PC-9 (cell line): ENCODE measurements at regions of chr1 and their contacts with region 1.

Region 1: GRCh38 chr1:244272471-244273261 is 179.0 kb downstream of the ADSS2 start:
- DNase-seq: peak; percentile 70 to 77
- H3K4me3 ChIP-seq: no peak overlapping the region
- H3K27ac ChIP-seq: peak overlapping the region; percentile 14; the same call in 1 of the 2 replicates
- H3K4me1 ChIP-seq: peaks cover 25% of the 10 kb centered on the region
- H3K27me3 ChIP-seq: no peaks in the 10 kb centered on the region
- CTCF ChIP-seq: peak; percentile 98

Region 2: DNA sequence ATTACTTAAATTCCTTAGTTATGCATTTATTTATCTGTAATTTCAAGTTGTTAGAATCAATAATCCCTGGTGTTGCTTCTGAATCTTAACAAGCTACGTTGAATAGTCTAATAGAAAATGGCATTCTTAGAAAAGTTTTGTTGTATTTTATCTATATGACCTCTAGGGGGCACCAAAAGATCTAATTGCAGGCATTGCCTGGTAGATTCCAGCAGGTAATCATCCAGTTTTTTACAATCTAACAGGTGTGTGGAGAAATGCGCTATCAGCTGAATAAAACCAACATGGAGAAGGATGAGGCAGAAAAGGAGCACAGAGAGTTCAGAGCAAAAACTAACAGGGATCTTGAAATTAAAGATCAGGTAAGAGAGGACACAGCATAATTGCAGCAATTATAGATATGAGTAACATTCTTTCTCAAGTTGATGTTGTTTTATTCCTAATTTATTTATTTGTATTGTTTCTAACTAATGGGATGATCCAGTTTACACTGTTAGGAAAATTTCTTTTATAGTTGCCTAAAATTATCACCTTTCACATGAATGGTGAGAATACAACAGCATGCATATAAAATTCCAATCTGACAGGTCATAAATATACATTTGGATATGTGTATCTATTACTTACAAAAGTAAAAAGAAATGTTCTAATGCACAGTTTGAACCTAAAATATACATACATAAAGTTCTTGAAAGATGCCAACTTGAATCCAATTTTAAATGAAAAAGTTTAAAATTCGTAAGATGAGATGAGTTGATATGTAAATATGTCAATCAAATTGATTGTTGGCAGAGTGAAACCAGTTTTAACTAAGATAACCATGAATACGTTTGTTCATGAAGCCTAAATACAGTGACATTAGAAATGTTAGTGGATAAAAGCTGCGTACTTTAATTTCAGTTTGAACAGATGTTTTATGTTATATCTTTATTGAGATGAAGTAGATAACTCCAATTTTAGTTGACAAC is 928.4 kb before region 1 on chr1:
- CTCF ChIA-PET with region 1: interaction called, 3 read pairs
- POLR2A ChIA-PET with region 1: no interaction called
- intact Hi-C with region 1: loop called (anchors 1 kb)
- DNase-seq: peak in 1 of 2 experiments; percentile 48
- H3K4me3 ChIP-seq: no peak overlapping the region
- H3K27ac ChIP-seq: no peak overlapping the region
- H3K4me1 ChIP-seq: no peaks in the 10 kb centered on the region
- H3K27me3 ChIP-seq: no peaks in the 10 kb centered on the region
- CTCF ChIP-seq: peak; percentile 87

Region 3: GRCh38 chr1:243850452-243851256 is 422.0 kb before region 1 on chr1:
- CTCF ChIA-PET with region 1: no interaction called
- POLR2A ChIA-PET with region 1: no interaction called
- intact Hi-C with region 1: loop called (anchors 2 kb)
- DNase-seq: peak; percentile 70 to 92
- H3K4me3 ChIP-seq: peak overlapping the region; percentile 69
- H3K27ac ChIP-seq: peak overlapping the region; percentile 85
- H3K4me1 ChIP-seq: peaks cover 49% of the 10 kb centered on the region
- H3K27me3 ChIP-seq: no peaks in the 10 kb centered on the region
- CTCF ChIP-seq: no peak

Region 4: GRCh38 chr1:244012202-244012601 is 260.5 kb before region 1 on chr1:
- CTCF ChIA-PET with region 1: no interaction called
- POLR2A ChIA-PET with region 1: interaction called, 27 read pairs
- intact Hi-C with region 1: no loop called
- DNase-seq: peak in 1 of 2 experiments; percentile 43
- H3K4me3 ChIP-seq: no peak overlapping the region
- H3K27ac ChIP-seq: no peak overlapping the region
- H3K4me1 ChIP-seq: no peaks in the 10 kb centered on the region
- H3K27me3 ChIP-seq: no peaks in the 10 kb centered on the region
- CTCF ChIP-seq: no peak

Region 5: GRCh38 chr1:244163861-244164562 is 108.7 kb before region 1 on chr1:
- CTCF ChIA-PET with region 1: no interaction called
- POLR2A ChIA-PET with region 1: no interaction called
- intact Hi-C with region 1: loop called (anchors 1 kb)
- DNase-seq: peak; percentile 76 to 100
- H3K4me3 ChIP-seq: peak overlapping the region; percentile 15; the same call in 1 of the 2 replicates
- H3K27ac ChIP-seq: peak overlapping the region; percentile 83
- H3K4me1 ChIP-seq: peaks cover 54% of the 10 kb centered on the region
- H3K27me3 ChIP-seq: no peaks in the 10 kb centered on the region
- CTCF ChIP-seq: no peak

Region 6: DNA sequence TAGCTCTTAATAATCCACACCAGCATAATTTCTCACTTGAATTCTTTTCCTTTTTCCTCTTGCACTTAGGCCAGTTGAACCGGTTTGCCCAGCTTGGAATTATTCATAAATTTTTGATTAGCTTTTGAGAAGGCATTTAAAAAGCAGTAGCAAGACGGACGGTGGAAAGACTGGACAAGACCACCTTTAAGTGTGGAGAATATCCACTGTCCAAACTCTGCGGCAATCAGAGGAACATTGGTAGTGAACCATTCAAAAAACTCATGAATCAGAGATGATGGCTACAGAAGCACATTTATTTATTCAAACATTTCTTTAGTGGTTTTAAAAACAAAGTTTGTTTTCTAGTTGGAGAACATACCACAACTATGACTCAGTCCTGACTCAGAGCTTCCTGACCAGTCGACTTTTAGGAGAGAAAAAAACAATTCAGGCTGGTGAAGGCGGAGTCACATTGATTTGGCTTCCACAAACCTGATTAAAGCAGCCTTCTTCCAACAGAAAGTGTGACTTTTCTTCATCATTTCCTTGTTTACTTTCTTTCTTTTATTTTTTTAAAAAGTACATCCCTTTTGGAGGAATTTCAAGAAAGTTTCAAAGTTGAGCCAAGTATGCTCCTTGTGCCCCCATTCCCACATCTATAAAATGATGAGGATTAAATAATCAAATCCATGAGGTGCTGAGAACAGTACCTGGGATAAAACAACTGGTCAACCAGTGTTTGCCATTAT is 50.3 kb after region 1 on chr1:
- CTCF ChIA-PET with region 1: no interaction called
- POLR2A ChIA-PET with region 1: no interaction called
- intact Hi-C with region 1: loop called (anchors 1 kb)
- DNase-seq: peak; percentile 68 to 96
- H3K4me3 ChIP-seq: peak overlapping the region; percentile 52
- H3K27ac ChIP-seq: peak overlapping the region; percentile 96
- H3K4me1 ChIP-seq: peaks cover 45% of the 10 kb centered on the region
- H3K27me3 ChIP-seq: no peaks in the 10 kb centered on the region
- CTCF ChIP-seq: no peak